Heart right ventricle (tissue), 16 donors: ENCODE measurements at regions of chr13 and their contacts with region 1.

Region 1: GRCh38 chr13:60850526-60850925 is 453.5 kb downstream of the TDRD3 start:
- DNase-seq: no peak
- ATAC-seq: no peak
- H3K4me3 ChIP-seq: no peak overlapping the region
- H3K27ac ChIP-seq: no peak overlapping the region
- H3K4me1 ChIP-seq: no peaks in the 10 kb centered on the region
- H3K27me3 ChIP-seq: no peaks in the 10 kb centered on the region
- CTCF ChIP-seq: no peak

Region 2: DNA sequence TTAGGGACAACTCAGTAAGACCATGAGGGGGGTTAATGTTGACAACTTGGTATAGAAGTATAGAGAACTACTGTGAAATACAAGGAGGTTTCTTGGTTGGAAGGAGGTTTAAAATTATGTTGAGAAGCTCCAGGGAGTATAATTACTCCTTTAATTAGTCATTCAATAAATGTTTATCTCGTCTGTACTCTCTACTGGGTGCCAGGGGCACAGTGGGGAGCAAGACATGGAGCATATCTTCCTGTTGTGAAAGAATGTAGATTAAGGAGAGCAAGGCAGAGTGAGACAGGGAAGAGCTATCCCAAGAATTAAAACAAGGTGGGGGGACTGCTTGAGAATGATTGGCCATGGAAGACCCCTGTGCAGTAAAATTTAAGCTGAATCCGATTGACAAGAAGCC is 487.2 kb before region 1 on chr13:
- intact Hi-C with region 1: loop called in 1 of 10 experiments (anchors 5 kb)
- DNase-seq: no peak
- ATAC-seq: no peak
- H3K4me3 ChIP-seq: no peak overlapping the region
- H3K27ac ChIP-seq: no peak overlapping the region
- H3K4me1 ChIP-seq: no peaks in the 10 kb centered on the region
- H3K27me3 ChIP-seq: peaks cover 0 to 4% (median 0%) of the 10 kb centered on the region in 7 donors
- CTCF ChIP-seq: no peak

Region 3: DNA sequence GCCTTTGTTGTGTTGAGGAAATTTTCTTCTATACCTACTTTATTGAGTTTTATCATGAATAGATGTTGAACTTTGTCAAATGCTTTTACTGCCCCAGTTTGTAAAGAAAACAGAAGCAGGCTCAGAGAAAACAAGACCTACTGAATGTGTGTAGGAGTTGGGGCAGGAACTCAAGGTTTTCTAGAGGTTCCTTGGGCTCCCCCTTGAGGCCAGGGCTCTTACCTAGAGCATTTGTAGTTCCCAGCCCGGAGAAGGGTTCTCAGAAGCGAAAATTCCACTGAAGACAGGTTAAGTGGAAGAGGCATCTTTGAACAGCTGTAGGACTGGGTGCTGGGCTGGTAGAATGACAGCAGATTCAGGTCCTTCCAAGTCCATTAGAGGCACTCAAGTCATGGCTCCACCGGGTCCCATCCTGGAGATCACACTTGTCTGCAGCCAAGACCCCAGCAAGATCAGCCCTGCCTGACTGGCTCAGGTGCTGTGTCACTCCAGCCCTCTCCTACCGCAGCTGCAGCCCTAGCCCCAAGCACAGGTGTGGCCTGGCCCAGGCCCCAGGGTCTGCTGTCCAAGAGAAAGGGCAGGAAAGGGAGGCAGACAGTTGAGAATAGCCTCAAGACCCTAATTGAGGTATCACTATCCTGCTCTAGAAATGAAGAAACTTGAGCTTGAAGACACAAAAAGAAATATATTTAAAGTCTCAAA is 139.7 kb after region 1 on chr13:
- intact Hi-C with region 1: no loop called
- DNase-seq: no peak
- ATAC-seq: no peak
- H3K4me3 ChIP-seq: no peak overlapping the region
- H3K27ac ChIP-seq: no peak overlapping the region
- H3K4me1 ChIP-seq: no peaks in the 10 kb centered on the region
- H3K27me3 ChIP-seq: no peaks in the 10 kb centered on the region
- CTCF ChIP-seq: no peak

Region 4: DNA sequence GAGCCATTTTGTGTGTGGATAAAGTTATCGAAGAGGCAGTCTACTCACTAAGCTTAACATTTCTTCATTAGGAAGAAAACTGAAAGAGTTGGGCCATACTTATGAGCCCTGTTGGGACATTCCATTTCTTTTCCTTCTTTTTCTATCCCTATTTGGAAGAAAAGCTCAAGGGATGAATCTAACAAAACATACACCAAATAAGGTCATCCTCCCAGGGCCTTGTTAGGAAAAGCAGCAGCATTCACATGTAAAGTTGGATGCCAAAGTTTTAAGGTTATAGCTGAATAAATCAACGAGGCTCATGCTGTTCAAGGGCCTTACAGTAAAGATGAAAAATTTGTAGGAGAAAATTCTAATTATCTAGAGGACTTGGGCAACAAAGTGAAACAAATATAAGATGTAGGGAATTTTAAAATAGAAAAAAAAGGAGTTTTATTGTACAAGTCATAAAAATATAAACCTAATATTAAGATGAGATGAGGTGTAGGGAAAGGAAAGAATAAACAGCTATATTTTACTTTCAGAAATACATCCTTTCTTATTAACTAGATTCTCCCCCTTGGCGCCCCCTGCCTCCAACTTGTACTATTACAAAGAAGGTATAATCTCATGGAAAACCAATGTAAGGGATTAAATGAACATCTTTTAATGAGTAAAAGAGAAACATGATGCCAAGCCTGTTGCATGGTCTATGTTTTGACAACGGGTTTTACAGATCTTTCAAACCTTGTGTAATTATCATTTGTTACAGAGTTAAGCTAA is 404.7 kb after region 1 on chr13:
- intact Hi-C with region 1: loop called in 1 of 10 experiments (anchors 10 kb)
- DNase-seq: no peak
- ATAC-seq: no peak
- H3K4me3 ChIP-seq: no peak overlapping the region
- H3K27ac ChIP-seq: no peak overlapping the region
- H3K4me1 ChIP-seq: no peaks in the 10 kb centered on the region
- H3K27me3 ChIP-seq: no peaks in the 10 kb centered on the region
- CTCF ChIP-seq: peak in 3 of 9 donors; percentile 4 to 14 (median 9)